ENCODE measurements at regions of chr5 and their contacts with region 1.

Region 1: DNA sequence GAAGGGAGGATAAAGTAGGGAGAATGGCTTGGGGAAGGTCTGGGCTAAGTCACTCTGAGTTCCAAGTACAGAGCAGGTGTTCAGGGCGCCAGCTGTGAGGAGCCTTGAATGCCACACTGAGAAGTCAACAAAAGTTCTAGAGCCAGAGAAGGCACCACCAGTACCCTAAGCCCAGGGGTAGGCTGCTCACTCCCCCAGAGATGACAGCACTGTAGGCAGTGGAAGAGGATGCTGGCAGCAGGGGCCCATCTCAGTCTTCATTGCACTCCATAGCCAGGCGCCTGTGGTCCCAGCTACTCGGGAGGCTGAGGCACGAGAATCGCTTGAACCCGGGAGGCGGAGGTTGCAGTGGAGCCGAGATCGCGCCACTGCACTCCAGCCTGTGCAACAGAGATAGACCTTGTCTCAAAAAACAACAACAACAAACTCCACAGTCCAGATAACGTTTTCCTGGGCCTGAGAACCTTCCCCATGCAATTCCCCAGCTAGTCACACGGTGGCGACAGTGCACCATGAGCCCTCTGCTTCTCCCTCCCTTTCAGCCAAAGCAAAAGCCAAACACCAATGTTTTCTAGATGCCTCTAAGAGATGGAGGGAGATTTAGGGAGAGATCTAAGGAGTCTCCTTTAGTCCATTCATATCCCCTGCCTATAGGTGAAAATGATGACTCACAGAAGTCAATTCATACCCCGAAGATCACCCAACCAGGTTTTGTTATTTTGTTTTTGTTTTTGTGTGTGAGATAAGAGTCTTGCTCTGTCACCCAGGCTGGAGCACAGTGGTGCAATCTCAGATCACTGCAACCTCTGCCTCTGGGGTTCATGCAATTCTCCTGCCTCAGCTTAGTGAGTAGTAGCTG is 19.8 kb upstream of the NSD1 start:
- DNase-seq: peak; percentile 45
- H3K4me3 ChIP-seq: no peak overlapping the region
- H3K27ac ChIP-seq: no peak overlapping the region
- H3K4me1 ChIP-seq: peaks cover 4% of the 10 kb centered on the region
- H3K27me3 ChIP-seq: no peaks in the 10 kb centered on the region
- CTCF ChIP-seq: peak; percentile 99 to 100

Region 2: DNA sequence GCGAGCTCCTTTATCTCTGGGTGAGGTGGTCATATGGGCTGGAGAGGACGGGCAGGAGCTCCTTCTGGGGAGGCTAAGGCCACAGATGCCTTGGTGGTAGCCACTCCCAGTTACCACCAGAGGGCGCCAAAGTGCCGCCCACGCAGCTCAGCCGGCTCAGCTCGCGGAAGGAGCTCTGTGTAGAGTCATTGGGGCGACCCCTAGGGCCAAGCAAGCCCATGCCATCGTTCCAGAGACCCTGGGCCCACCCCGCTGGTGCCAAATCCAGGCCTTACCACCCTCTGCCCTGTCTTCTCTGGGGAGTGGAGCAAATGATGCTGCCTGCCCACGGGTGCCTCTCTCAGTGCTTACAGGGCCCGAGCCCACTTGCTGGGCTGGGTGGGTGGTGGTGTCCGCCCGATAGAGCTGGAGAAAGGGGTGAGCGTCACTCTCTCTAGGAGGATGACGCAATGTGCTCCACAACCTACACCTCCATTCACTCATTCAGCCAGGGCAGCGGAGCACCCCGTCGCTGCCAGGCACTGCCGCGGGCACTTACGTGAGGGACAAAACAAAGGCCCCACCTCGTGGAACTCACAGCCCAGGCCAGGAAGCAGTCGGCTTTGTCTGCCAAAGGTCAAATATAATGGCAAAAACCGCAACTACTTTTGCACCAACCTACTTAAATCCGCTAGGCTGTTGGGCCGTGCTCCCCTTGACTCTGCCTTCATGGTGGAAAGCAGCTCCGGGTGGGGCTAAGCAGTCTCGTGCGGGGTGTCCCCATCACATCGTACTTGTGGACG is 452.7 kb before region 1 on chr5:
- CTCF ChIA-PET with region 1: interaction called, 7 read pairs
- dilution Hi-C with region 1: no loop called
- in situ Hi-C with region 1: loop called (anchors 10 kb)
- intact Hi-C with region 1: loop called (anchors 1 kb)
- DNase-seq: peak; percentile 49
- H3K4me3 ChIP-seq: no peak overlapping the region
- H3K27ac ChIP-seq: no peak overlapping the region
- H3K4me1 ChIP-seq: no peaks in the 10 kb centered on the region
- H3K27me3 ChIP-seq: no peaks in the 10 kb centered on the region
- CTCF ChIP-seq: peak; percentile 77 to 98

Region 3: DNA sequence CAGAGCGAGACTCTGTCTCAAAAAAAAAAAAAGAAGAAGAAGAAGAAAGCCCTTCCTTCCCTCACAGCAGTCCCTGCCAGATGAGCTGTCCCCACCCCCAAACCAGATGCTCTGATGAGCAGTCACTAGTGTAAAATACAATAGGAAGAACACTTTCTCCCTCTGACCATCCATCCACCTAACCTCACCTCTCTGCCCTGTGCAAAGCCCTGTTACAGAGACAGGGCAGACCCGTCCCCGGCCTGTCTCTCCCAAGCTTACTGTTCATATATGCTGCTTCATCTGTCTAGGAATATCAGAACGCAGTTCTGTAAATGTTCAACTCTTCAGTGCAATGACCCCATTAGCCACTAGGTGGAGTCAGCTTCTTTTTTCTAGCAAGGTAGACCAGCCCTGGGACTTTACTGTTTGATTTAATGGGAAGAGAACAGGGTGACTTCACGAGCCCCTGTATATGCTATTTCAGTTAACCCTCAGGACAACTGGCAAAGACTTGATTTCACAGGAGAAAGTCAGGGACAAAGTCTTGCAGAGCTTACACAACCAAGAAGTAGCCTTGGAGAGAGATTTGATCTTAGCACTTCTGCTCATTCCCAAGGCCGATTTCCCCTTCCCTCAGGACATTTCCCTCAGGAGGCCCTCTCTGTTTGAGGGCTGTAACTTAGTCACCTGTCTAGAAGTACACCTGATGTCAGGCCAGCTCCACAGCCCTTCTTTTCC is 42.0 kb before region 1 on chr5:
- CTCF ChIA-PET with region 1: no interaction called
- dilution Hi-C with region 1: no loop called
- in situ Hi-C with region 1: no loop called
- intact Hi-C with region 1: loop called (anchors 1 kb)
- DNase-seq: peak; percentile 62
- H3K4me3 ChIP-seq: no peak overlapping the region
- H3K27ac ChIP-seq: no peak overlapping the region
- H3K4me1 ChIP-seq: peaks cover 12% of the 10 kb centered on the region
- H3K27me3 ChIP-seq: no peaks in the 10 kb centered on the region
- CTCF ChIP-seq: peak; percentile 86 to 90

Region 4: DNA sequence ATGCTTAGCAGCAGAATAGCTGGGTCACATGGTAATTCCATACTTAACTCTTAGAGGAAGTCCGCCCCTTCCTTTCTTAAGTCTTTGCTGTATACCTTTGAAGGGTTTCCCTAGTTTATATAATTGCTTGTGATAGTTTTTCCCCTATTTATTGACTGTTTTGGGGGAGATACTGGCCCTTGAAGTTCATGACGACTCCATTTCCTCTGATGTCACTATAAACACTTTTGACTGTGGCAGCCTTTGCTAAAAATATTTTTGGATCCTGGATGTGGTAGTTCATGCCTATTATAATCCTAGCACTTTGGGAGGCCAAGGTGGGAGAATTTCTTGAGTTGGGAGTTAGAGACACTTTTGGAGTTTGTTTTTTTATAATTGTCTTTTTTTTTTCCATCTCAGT is 58.2 kb after region 1 on chr5:
- CTCF ChIA-PET with region 1: no interaction called
- dilution Hi-C with region 1: no loop called
- in situ Hi-C with region 1: no loop called
- intact Hi-C with region 1: no loop called
- DNase-seq: no peak
- H3K4me3 ChIP-seq: no peak overlapping the region
- H3K27ac ChIP-seq: no peak overlapping the region
- H3K4me1 ChIP-seq: no peaks in the 10 kb centered on the region
- H3K27me3 ChIP-seq: no peaks in the 10 kb centered on the region
- CTCF ChIP-seq: no peak

Region 5: DNA sequence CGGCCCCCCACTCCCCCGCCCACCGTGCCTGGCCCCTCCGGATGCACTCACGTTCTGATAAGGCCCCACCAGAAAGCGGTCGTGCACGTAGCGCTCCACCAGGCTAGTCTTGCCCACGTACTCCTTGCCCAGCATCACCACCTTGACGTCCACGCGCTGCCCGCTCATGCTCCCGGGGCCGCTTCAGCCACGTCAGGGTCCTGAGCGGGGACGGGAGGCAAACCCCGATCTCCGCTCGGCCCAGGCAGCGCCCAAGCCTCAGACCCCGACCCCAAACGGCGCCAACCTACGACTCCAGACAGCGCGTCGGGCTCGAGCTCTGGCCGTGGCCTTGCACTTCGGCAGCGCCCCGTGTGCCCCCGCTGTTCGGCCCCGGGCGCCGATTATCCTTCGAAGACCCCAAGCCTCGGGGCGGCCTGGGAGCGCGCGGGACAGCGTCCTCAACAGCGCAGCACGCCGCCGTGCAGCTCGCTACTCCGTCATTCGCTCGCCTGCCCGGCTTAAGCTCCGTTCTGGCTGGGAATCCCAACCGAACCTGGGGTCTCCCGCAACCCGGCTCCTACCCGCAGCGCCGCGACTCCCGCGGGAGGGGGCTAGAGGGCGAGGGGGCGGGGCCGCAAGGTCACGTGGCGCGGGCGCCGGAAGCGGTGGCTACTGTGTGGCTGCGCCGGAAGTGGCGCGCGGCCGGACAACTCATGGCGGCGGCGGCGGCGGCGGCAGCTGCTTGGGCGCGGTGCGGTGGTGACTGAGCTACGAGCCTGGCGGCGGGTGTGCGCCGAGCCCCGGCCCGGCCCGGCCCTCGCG is 189.5 kb after region 1 on chr5 and contains the starts of genes PRELID1 and RAB24:
- CTCF ChIA-PET with region 1: interaction called, 6 read pairs
- dilution Hi-C with region 1: no loop called
- in situ Hi-C with region 1: no loop called
- intact Hi-C with region 1: loop called (anchors 1 kb)
- DNase-seq: peak; percentile 78
- H3K4me3 ChIP-seq: peak within 1 kb of the TSS; percentile 54 to 95 (median 85)
- H3K27ac ChIP-seq: peak within 1 kb of the TSS; percentile 82
- H3K4me1 ChIP-seq: peaks cover 49% of the 10 kb centered on the region
- H3K27me3 ChIP-seq: no peaks in the 10 kb centered on the region
- CTCF ChIP-seq: peak in 1 of 2 donors; percentile 46
- total RNA-seq, gene PRELID1: 51.5 to 181 TPM
- total RNA-seq, gene RAB24: 10.3 to 21.4 TPM

Region 6: DNA sequence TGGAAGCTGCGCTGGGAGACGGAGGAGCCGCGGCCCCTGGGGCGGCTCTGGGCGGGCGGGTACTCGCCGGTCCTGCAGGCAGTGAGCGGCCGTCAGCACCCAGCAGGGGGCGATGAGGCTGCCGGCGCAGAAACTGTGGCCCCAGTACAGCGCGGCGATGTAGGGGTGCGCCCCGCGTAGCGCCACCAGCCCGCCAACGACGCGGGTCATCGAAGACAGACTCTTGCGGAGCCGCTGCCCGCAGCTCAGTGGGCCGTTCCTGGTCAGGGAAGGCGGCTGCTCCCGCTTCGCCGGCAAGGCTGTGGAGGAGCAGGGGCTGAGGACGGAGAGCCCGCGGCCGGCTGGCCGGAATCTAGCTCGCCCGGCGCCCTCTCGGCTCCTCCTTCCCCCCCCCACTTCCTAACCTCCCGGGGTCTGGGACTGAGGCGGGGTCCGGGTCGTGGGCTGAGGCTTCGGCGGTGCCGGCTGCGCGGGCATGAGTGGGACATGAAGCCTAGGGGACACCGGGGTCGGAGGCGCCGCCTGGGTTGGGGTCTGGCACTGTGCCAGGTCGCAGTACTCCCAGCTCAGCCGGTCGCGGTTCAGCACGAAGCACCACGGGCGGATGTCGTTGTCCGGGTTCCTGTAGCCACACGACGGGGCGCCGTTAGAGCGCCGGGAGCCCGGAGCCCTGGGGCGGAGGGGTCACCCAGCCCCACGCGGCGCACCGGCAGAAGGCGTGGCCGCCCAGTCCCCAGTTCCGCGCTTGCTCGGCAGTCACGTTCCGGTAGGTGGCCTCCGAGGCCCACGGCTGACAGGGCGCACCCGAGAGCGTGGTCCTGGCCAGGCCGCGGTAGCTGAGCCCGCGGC is 290.2 kb after region 1 on chr5:
- CTCF ChIA-PET with region 1: no interaction called
- dilution Hi-C with region 1: no loop called
- in situ Hi-C with region 1: loop called in 1 of 2 experiments (anchors 10 kb)
- intact Hi-C with region 1: loop called (anchors 1 kb)
- DNase-seq: peak; percentile 65
- H3K4me3 ChIP-seq: peak overlapping the region; percentile 55 to 74 (median 65)
- H3K27ac ChIP-seq: no peak overlapping the region
- H3K4me1 ChIP-seq: peaks cover 28% of the 10 kb centered on the region
- H3K27me3 ChIP-seq: no peaks in the 10 kb centered on the region
- CTCF ChIP-seq: peak; percentile 35 to 82